Astrocyte of the cerebellum (primary cell): ENCODE measurements at regions of chr16 and their contacts with region 1.

Region 1: GRCh38 chr16:88754912-88755744 is 29.9 kb downstream of the PIEZO1 start:
- DNase-seq: no peak
- H3K4me3 ChIP-seq: no peak overlapping the region
- CTCF ChIP-seq: peak; percentile 70

Region 2: GRCh38 chr16:88357306-88358022 is 397.7 kb before region 1 on chr16:
- in situ Hi-C with region 1: no loop called
- DNase-seq: no peak
- H3K4me3 ChIP-seq: no peak overlapping the region
- CTCF ChIP-seq: no peak

Region 3: DNA sequence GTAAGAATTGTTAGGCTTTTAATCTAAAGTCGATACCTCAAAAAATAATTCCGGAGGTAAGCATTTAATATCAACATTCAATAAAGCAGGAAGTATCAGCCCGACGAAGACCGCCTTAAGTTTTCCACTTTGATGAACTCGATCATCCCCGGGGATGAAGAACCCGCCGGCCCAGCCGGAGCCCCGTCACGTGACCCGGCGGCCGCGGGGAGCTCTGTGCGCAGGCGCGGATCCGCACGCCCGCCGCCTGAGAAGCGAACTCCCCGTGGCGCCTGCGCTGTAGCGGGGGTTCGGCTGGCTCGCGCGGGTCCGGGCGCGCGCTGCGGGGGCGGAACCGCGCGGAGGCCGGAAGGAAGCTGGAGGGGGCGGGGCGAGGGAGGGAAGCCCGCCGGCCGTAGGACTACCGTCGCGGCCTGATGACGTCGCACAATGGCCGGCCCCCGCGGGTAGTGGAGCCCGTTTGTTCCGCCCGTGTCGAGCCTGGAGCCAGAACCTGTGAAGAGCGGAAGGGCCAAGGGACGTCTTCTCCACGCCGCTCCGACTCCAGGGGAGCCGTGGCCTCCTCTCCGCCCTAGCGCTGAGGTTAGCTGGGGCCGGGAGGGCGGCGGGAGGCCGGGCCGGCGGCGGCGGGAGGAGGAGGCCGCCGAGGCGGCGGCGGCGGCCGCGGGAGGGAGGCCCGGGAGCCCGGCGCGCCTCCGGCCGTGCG is 185.0 kb before region 1 on chr16 and contains the start of gene ZC3H18:
- in situ Hi-C with region 1: no loop called
- DNase-seq: peak; percentile 86
- H3K4me3 ChIP-seq: peak within 1 kb of the TSS; percentile 93
- CTCF ChIP-seq: no peak

Region 4: GRCh38 chr16:88610080-88610479 is 145.0 kb before region 1 on chr16:
- in situ Hi-C with region 1: no loop called
- DNase-seq: no peak
- H3K4me3 ChIP-seq: no peak overlapping the region
- CTCF ChIP-seq: peak; percentile 33

Region 5: GRCh38 chr16:89142478-89143195 is 387.5 kb after region 1 on chr16:
- in situ Hi-C with region 1: loop called (anchors 10 kb)
- DNase-seq: no peak
- H3K4me3 ChIP-seq: no peak overlapping the region
- CTCF ChIP-seq: no peak

Region 6: GRCh38 chr16:89201439-89202377 is 446.6 kb after region 1 on chr16:
- in situ Hi-C with region 1: loop called (anchors 10 kb)
- DNase-seq: no peak
- H3K4me3 ChIP-seq: no peak overlapping the region
- CTCF ChIP-seq: no peak